GM12878 (cell line): ENCODE measurements at regions of chr5 and their contacts with region 1.

Region 1: GRCh38 chr5:56088967-56089829 is 94.4 kb upstream of the IL6ST start:
- DNase-seq: peak; percentile 74
- ATAC-seq: peak; percentile 95
- H3K4me3 ChIP-seq: no peak overlapping the region
- H3K27ac ChIP-seq: peak overlapping the region; percentile 41
- H3K4me1 ChIP-seq: peaks cover 8% of the 10 kb centered on the region
- H3K27me3 ChIP-seq: no peaks in the 10 kb centered on the region
- CTCF ChIP-seq: no peak
- EP300 ChIP-seq: no peak
- POLR2A ChIP-seq: no peak
- RAD21 ChIP-seq: no peak

Region 2: GRCh38 chr5:56064984-56065383 is 24.2 kb before region 1 on chr5:
- CTCF ChIA-PET with region 1: interaction called, 5 read pairs
- POLR2A ChIA-PET with region 1: interaction called, 6 read pairs
- RAD21 ChIA-PET with region 1: interaction called, 45 read pairs
- SMC1A ChIA-PET with region 1: interaction called, 49 read pairs
- in situ Hi-C with region 1: no loop called
- intact Hi-C with region 1: no loop called
- DNase-seq: peak; percentile 95
- ATAC-seq: peak; percentile 68
- H3K4me3 ChIP-seq: no peak overlapping the region
- H3K27ac ChIP-seq: peak overlapping the region; percentile 28
- H3K4me1 ChIP-seq: peaks cover 16% of the 10 kb centered on the region
- H3K27me3 ChIP-seq: no peaks in the 10 kb centered on the region
- CTCF ChIP-seq: no peak
- EP300 ChIP-seq: peak in 1 of 2 experiments; percentile 91; a peak in 2 of 4 replicates
- POLR2A ChIP-seq: no peak
- RAD21 ChIP-seq: no peak